ENCODE measurements at regions of chr3 and their contacts with region 1.

Region 1: GRCh38 chr3:118884748-118885206 is 149.9 kb downstream of the IGSF11 start:
- DNase-seq: peak; percentile 57
- H3K4me3 ChIP-seq: peak overlapping the region in 1 of 2 experiments; percentile 44; a peak in 1 of 4 replicates
- H3K27ac ChIP-seq: no peak overlapping the region
- H3K4me1 ChIP-seq: no peaks in the 10 kb centered on the region
- H3K27me3 ChIP-seq: no peaks in the 10 kb centered on the region
- CTCF ChIP-seq: peak; percentile 96
- EP300 ChIP-seq: no peak
- RAD21 ChIP-seq: peak; percentile 58

Region 2: GRCh38 chr3:118863731-118864322 is 20.9 kb before region 1 on chr3:
- CTCF ChIA-PET with region 1: interaction called, 33 read pairs
- POLR2A ChIA-PET with region 1: no interaction called
- DNase-seq: no peak
- H3K4me3 ChIP-seq: no peak overlapping the region
- H3K27ac ChIP-seq: no peak overlapping the region
- H3K4me1 ChIP-seq: no peaks in the 10 kb centered on the region
- H3K27me3 ChIP-seq: no peaks in the 10 kb centered on the region
- CTCF ChIP-seq: peak; percentile 25
- EP300 ChIP-seq: no peak
- RAD21 ChIP-seq: no peak

Region 3: DNA sequence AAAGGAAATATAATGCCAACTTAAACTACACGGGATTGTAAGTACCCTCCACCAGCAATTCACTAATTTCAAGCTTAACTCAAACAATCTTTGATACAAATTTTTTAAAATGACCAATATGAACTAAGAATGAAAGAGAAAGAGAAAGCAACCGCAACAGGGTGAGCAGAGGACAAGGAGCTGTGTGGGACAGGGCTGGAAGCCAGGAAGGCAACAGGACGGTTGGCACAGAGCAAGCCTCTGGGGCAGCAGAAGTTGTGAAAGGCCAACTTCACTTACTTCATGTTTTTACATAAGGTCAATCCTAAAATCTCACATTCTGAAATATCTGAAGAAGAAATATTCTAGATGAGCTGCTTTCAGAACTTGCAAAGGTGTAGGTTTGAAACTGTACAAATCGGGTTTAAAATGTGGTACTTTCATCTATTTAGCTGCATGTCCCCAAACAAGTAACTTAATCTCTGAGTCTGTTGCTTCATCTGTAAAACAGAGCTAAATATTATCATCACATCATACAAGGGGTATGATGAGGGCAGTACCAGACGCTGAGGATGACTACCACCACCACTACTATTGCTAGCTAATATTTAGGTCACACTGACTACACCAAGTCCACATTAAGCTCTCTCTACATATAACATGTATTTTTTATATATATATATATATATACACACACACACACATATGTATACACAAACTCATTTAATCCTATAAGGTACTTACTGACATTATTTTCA is 48.2 kb after region 1 on chr3:
- CTCF ChIA-PET with region 1: interaction called, 16 read pairs
- POLR2A ChIA-PET with region 1: no interaction called
- DNase-seq: no peak
- H3K4me3 ChIP-seq: no peak overlapping the region
- H3K27ac ChIP-seq: no peak overlapping the region
- H3K4me1 ChIP-seq: no peaks in the 10 kb centered on the region
- H3K27me3 ChIP-seq: no peaks in the 10 kb centered on the region
- CTCF ChIP-seq: no peak
- EP300 ChIP-seq: no peak
- RAD21 ChIP-seq: no peak

Region 4: GRCh38 chr3:119018690-119019463 is 134.1 kb after region 1 on chr3:
- CTCF ChIA-PET with region 1: interaction called, 25 read pairs
- POLR2A ChIA-PET with region 1: no interaction called
- DNase-seq: peak; percentile 22
- H3K4me3 ChIP-seq: no peak overlapping the region
- H3K27ac ChIP-seq: no peak overlapping the region; a peak in 1 of 4 replicates
- H3K4me1 ChIP-seq: peaks cover 0 to 10% of the 10 kb centered on the region in 2 experiments; a peak in 2 of 4 replicates
- H3K27me3 ChIP-seq: no peaks in the 10 kb centered on the region
- CTCF ChIP-seq: no peak
- EP300 ChIP-seq: peak in 1 of 2 experiments; percentile 41; a peak in 1 of 4 replicates
- RAD21 ChIP-seq: no peak

Region 5: GRCh38 chr3:119042164-119042563 is 157.4 kb after region 1 on chr3:
- CTCF ChIA-PET with region 1: interaction called, 432 read pairs
- POLR2A ChIA-PET with region 1: no interaction called
- DNase-seq: peak; percentile 12
- H3K4me3 ChIP-seq: no peak overlapping the region
- H3K27ac ChIP-seq: no peak overlapping the region
- H3K4me1 ChIP-seq: no peaks in the 10 kb centered on the region
- H3K27me3 ChIP-seq: no peaks in the 10 kb centered on the region
- CTCF ChIP-seq: no peak
- EP300 ChIP-seq: no peak
- RAD21 ChIP-seq: no peak

Region 6: GRCh38 chr3:119084371-119085072 is 199.7 kb after region 1 on chr3:
- CTCF ChIA-PET with region 1: interaction called, 521 read pairs
- POLR2A ChIA-PET with region 1: no interaction called
- DNase-seq: no peak
- H3K4me3 ChIP-seq: no peak overlapping the region
- H3K27ac ChIP-seq: no peak overlapping the region
- H3K4me1 ChIP-seq: no peaks in the 10 kb centered on the region; a peak in 1 of 4 replicates
- H3K27me3 ChIP-seq: no peaks in the 10 kb centered on the region
- CTCF ChIP-seq: no peak
- EP300 ChIP-seq: no peak
- RAD21 ChIP-seq: no peak

Region 7: GRCh38 chr3:119122109-119122749 is 237.5 kb after region 1 on chr3:
- CTCF ChIA-PET with region 1: interaction called, 16 read pairs
- POLR2A ChIA-PET with region 1: no interaction called
- DNase-seq: no peak
- H3K4me3 ChIP-seq: no peak overlapping the region
- H3K27ac ChIP-seq: no peak overlapping the region
- H3K4me1 ChIP-seq: no peaks in the 10 kb centered on the region
- H3K27me3 ChIP-seq: no peaks in the 10 kb centered on the region
- CTCF ChIP-seq: no peak
- EP300 ChIP-seq: no peak
- RAD21 ChIP-seq: no peak

Region 8: DNA sequence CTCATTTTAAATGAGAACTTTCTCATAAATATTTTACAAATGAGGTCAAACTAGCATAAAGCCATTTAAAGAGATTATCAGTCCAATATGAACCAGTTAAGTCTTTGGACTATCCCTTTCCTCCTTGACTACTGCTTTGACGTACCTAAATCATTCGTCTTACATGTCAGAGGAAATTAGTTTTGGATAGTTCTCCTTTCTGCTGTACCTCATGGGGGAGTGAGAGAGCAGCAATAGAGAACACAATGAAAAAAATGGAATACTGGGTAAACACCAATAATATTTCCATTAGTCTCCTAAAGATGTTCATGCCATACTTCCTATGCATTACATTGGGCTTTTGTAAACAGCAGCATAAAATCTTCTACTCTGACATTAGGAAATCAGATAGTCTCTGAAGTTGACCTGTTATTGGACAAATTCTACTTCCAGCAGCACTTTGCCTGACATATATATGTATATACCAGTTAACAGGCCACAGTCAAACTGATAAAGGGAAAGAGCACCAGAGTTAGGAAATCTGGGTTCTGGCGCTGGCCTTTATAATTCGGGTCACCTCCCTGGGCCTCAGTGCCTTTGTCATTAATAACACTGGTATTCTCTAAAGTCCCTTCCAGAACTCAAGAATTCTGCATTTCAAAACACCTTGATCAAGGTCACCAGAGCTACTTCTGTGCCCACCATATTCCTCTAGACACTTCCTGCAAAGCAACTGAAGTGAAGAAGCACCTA is 640.3 kb after region 1 on chr3:
- CTCF ChIA-PET with region 1: no interaction called
- POLR2A ChIA-PET with region 1: no interaction called
- DNase-seq: peak; percentile 11
- H3K4me3 ChIP-seq: no peak overlapping the region
- H3K27ac ChIP-seq: peak overlapping the region in 1 of 2 experiments; percentile 55; a peak in 2 of 4 replicates
- H3K4me1 ChIP-seq: no peaks in the 10 kb centered on the region; a peak in 1 of 4 replicates
- H3K27me3 ChIP-seq: no peaks in the 10 kb centered on the region
- CTCF ChIP-seq: peak; percentile 58
- EP300 ChIP-seq: no peak
- RAD21 ChIP-seq: peak; percentile 69

Measured in SK-N-SH (cell line).